Body of pancreas (tissue), 4 donors: ENCODE measurements at regions of chr1 and their contacts with region 1.

Region 1: GRCh38 chr1:200488375-200489165 is 78.7 kb upstream of the ZNF281 start:
- DNase-seq: peak; percentile 71 to 78 (median 76)
- ATAC-seq: peak; percentile 91
- H3K4me3 ChIP-seq: no peak overlapping the region
- H3K27ac ChIP-seq: peak overlapping the region in 1 of 4 donors; percentile 35
- H3K4me1 ChIP-seq: peaks cover 30% of the 10 kb centered on the region
- H3K27me3 ChIP-seq: no peaks in the 10 kb centered on the region
- CTCF ChIP-seq: peak; percentile 63 to 94 (median 84)
- POLR2A ChIP-seq: no peak

Region 2: DNA sequence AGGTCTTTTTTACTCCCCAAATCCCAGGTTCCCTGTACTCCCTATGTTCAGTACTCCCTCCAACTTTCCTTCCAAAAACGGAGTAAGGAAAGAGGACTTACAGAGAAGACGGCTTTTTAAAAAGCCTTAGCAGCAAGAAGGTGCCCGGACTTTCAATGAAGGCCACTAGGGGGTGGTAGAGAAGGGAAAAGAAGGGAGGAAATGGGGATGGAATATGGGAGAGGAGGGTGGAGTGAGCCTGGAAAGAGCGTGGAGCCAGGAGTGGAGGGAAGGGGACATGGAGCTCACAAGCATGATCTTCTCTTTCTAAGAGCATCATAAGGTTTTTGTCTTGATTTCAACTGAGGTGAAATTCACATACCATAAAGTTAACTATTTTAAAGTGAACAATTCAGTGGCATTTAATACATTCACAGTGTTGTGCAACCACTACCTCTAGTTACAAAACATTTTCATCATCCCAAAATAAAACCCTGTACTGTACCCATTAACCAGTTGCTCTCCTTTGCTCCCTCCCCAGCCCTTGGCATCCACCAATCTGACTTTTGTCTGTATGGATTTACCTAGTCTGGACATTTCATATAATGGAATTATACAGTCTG is 208.7 kb before region 1 on chr1:
- intact Hi-C with region 1: loop called (anchors 10 kb)
- DNase-seq: peak; percentile 65 to 77 (median 70)
- ATAC-seq: peak; percentile 91
- H3K4me3 ChIP-seq: no peak overlapping the region
- H3K27ac ChIP-seq: no peak overlapping the region
- H3K4me1 ChIP-seq: peaks cover 28% of the 10 kb centered on the region
- H3K27me3 ChIP-seq: no peaks in the 10 kb centered on the region
- CTCF ChIP-seq: peak; percentile 46 to 93 (median 79)
- POLR2A ChIP-seq: no peak